GM10248 (cell line): ENCODE measurements at regions of chr6 and their contacts with region 1.

Region 1: DNA sequence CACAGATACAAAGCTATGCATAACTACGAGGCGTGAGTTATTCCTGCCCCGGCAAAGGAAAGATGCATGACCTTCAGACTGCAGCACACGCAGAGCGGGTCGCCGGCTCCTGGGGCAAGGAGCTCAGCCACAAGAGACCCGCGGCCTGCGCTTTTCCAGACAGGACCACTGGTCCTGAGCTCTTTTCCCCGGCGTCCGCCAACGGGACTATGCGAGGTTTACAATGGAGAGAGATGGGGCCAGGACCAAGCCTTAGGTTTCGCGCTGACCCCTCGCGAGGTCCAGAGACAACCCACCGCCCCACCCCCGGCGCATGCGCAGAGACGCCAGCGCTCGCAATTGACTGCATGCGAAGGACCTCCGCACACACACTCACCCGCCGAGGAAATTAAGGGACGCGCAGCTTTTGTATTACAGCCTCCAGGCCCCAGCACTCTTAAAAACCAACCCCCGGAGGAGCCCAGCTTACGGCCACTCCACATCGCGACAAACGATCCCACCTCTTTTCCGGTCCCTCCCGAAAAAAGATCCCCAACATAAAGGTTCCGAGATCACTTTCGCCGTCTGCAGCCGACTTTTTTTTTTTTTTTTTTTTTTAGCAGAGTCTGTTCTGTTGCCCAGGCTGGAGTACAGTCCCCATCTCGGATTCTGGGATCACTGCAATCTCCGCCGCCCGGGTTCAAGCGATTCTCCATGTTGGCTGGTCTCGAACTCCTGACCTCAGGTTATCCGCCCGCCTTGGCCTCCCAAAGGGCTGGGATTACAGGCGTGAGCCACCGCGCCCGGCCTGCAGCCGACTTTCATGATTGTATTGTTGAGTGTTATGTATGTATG is at the start of gene COQ3:
- DNase-seq: peak; percentile 90
- CTCF ChIP-seq: no peak

Region 2: GRCh38 chr6:99369533-99369932 is 24.4 kb before region 1 on chr6:
- CTCF ChIA-PET with region 1: no interaction called
- POLR2A ChIA-PET with region 1: no interaction called
- DNase-seq: no peak
- CTCF ChIP-seq: no peak

Region 3: GRCh38 chr6:99412065-99412464 is 18.1 kb after region 1 on chr6:
- CTCF ChIA-PET with region 1: interaction called, 27 read pairs
- POLR2A ChIA-PET with region 1: no interaction called
- DNase-seq: no peak
- CTCF ChIP-seq: no peak

Region 4: GRCh38 chr6:99425647-99426453 is 31.9 kb after region 1 on chr6:
- CTCF ChIA-PET with region 1: interaction called, 16 read pairs
- POLR2A ChIA-PET with region 1: interaction called, 3 read pairs
- DNase-seq: peak; percentile 54
- CTCF ChIP-seq: peak; percentile 47